Psoas muscle (tissue), 8 donors: ENCODE measurements at regions of chr11 and their contacts with region 1.

Region 1: DNA sequence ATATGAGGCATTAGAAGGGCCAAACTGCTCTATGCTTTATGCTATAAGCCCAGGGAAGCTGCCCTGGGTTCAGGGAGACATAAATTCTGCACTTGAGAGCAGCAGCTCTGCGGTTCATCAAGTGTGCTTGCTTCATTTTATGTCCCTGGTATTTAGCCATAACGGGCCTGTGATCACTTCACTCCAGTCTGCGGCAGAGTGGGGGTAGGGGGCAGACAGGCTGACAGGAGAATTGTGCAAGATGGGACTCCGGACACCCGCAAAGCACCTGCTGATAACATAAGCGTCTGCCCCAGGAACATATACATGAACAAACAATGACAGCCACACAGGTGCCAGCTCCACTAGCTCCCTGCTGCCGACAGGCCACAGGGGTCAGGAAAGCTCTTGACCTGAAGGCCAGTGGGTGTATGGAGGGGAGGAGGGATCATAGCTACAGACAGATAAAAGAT is 56.1 kb downstream of the SMCO4 start:
- DNase-seq: no peak
- ATAC-seq: no peak
- H3K4me3 ChIP-seq: no peak overlapping the region
- H3K27ac ChIP-seq: no peak overlapping the region
- H3K4me1 ChIP-seq: no peaks in the 10 kb centered on the region
- H3K27me3 ChIP-seq: no peaks in the 10 kb centered on the region
- CTCF ChIP-seq: no peak

Region 2: DNA sequence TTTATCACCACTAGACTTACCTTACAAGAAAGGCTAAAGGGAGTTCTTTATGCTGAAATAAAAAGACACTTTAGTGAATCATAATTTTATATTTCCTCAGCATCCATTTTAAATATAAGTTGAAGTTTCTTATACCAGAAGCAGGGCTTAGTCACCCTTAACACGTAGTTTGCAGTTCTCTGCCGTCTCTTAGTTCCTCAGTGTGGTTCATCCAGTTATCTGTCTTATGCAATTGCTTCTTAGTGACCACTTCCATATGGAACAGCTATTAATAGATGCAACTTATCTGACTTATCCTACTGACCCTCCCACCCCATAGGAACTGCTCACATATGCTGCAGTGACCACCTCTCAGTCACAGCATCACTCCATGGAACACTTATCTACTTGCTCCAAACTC is 277.6 kb before region 1 on chr11:
- intact Hi-C with region 1: no loop called
- DNase-seq: no peak
- ATAC-seq: no peak
- H3K4me3 ChIP-seq: no peak overlapping the region
- H3K27ac ChIP-seq: no peak overlapping the region
- H3K4me1 ChIP-seq: no peaks in the 10 kb centered on the region
- H3K27me3 ChIP-seq: peaks cover 0 to 3% (median 0%) of the 10 kb centered on the region in 3 donors
- CTCF ChIP-seq: no peak

Region 3: GRCh38 chr11:93537767-93538261 is 50.8 kb after region 1 on chr11:
- intact Hi-C with region 1: loop called in 1 of 2 experiments (anchors 5 kb)
- DNase-seq: peak; percentile 40 to 54
- ATAC-seq: peak; percentile 50 to 73 (median 66)
- H3K4me3 ChIP-seq: peak overlapping the region; percentile 13
- H3K27ac ChIP-seq: peak overlapping the region; percentile 54
- H3K4me1 ChIP-seq: peaks cover 35% of the 10 kb centered on the region
- H3K27me3 ChIP-seq: no peaks in the 10 kb centered on the region
- CTCF ChIP-seq: no peak

Region 4: GRCh38 chr11:93727985-93728791 is 241.1 kb after region 1 on chr11:
- intact Hi-C with region 1: no loop called
- DNase-seq: no peak
- ATAC-seq: peak in 3 of 4 donors; percentile 21 to 34 (median 31)
- H3K4me3 ChIP-seq: no peak overlapping the region
- H3K27ac ChIP-seq: no peak overlapping the region
- H3K4me1 ChIP-seq: no peaks in the 10 kb centered on the region
- H3K27me3 ChIP-seq: no peaks in the 10 kb centered on the region
- CTCF ChIP-seq: no peak